Dendritic cell treated with granulocyte-macrophage colony-stimulating factor and Interleukin-4, amounts not matched to agents 40 ng/mL and 50 ng/mL, for 4 days (primary cell): ENCODE measurements at regions of chrX and their contacts with region 1.

Region 1: DNA sequence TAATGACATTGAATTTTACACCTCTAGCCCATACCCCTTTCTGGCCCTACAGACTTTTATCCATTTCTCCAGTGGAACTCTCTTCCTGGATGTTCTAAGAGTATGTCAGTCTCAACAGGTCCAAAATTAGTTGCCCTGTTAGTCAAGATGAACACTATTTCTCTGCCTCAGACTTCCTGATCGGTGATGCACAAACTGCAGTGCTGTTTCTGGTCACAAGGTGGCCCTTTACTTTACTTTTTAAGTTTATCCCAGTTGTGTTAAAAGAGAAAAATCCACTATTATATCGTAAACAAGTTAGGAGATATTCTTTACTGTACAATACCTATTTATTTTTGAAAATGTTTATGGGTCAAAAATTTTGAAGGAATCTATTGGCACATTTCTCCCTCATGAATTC is 13.1 kb downstream of the TCEAL7 start:
- H3K4me3 Mint-ChIP-seq: no peak overlapping the region
- H3K27ac Mint-ChIP-seq: no peak overlapping the region
- H3K4me1 Mint-ChIP-seq: no peaks in the 10 kb centered on the region
- H3K27me3 Mint-ChIP-seq: peaks cover 1% of the 10 kb centered on the region

Region 2: DNA sequence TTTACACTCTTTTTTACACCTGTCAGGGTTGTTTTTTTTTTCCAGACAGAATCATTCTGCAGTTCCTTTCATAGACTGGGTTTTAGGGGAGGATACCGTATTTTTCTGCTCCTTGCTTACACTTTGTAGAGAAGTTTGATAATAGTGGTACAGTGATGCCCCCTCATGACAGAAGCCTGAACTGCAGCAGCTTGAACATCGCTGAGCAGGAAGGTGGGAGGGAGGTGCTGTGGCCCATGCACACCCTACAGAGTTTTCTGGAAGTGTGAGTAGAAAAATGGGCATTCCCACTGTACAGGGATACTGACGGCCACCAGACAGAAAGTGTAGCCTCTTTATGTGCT is 121.6 kb after region 1 on chrX:
- intact Hi-C with region 1: loop called (anchors 1 kb)
- H3K4me3 Mint-ChIP-seq: peak overlapping the region; percentile 75
- H3K27ac Mint-ChIP-seq: no peak overlapping the region
- H3K4me1 Mint-ChIP-seq: peaks cover 5% of the 10 kb centered on the region
- H3K27me3 Mint-ChIP-seq: peaks cover 2% of the 10 kb centered on the region